ENCODE measurements at regions of chr2 and their contacts with region 1.

Region 1: DNA sequence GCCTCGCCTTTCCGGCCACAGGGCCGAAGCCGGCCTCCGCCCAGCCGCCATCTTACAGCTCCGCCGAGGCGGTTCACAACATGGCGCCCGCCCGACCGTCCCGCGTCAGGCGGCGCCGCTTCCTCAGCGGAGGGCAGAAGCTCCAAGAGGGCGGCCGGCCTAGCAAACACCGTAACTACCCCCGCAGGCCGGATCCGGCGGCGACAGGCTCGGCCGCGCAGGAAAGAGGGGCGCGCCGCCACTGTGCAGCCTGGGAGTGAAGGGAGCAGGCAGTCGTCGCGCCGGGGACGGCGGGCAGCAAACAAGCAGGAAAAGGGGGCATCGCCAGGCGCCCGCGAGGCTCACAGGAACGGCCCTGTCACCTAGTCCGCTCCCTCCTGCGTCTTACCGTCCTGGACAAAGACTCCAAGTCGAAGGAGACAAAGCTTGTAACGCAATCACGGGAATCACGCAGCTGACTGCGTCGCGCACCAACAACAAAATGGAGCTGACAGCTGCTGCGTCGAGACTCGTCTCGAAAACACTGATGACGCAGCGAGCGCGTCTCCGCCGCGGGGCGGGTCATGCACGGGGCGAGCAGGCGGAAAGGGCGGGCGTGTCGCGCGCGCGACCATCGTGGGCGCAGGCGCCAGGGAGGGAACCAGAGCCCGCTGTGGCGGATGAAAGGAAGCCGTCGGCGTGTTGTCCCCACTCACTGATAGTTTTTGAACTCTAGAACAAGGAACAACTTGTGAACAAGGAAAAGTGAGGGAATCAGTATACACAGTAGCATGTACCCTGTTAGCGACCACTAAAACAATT is at the start of gene CLK1:
- DNase-seq: peak; percentile 93 to 97 (median 94)
- H3K4me3 ChIP-seq: peak within 1 kb of the TSS; percentile 83 to 100
- H3K4me3 Mint-ChIP-seq: peak within 1 kb of the TSS; percentile 91 to 99 (median 96)
- H3K27ac ChIP-seq: peak within 1 kb of the TSS; percentile 100
- H3K27ac Mint-ChIP-seq: peak within 1 kb of the TSS; percentile 89 to 100 (median 100)
- H3K4me1 ChIP-seq: peaks cover 47% of the 10 kb centered on the region
- H3K4me1 Mint-ChIP-seq: peaks cover 28 to 59% (median 41%) of the 10 kb centered on the region in 4 donors
- H3K27me3 ChIP-seq: no peaks in the 10 kb centered on the region
- H3K27me3 Mint-ChIP-seq: no peaks in the 10 kb centered on the region
- total RNA-seq, gene CLK1: 472 to 499 TPM

Region 2: DNA sequence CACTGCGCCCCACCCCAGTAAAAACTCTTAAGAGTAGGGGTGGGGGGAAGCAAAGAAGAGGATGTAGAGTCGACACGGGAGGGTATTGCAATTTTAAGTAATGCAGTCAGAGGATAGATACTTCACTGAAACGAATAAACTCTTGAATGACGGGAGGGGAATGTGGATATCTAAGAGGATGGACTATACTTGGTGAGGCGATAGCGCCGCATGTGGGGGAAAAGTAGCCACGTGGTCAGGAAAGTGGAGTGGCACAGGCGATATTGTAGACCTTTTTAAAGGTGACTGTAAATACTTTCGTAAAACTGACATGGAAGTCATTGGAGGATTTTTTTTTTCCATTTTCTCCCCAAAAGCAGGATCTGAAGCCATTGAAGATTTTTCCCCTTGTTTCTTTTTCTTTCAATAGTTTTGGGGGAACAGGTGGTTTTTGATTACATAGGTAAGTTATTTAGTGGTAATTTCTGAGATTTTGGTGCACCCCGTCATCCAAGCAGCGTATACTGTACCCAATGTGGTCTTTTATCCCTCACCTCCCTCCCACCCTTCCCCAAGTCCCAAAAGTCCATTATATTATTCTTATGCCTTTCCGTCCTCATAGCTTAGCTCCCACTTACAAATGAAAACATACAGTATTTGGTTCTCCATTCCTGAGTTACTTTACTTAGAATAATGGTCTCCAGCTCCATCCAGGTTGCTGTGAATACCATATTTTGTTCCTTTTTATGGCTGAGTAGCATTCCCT is 13.7 kb before region 1 on chr2:
- CTCF ChIA-PET with region 1: interaction called, 6 read pairs
- POLR2A ChIA-PET with region 1: interaction called, 108 read pairs
- intact Hi-C with region 1: no loop called
- DNase-seq: no peak
- H3K4me3 ChIP-seq: no peak overlapping the region
- H3K4me3 Mint-ChIP-seq: peak overlapping the region in 1 of 8 donors; percentile 22
- H3K27ac ChIP-seq: no peak overlapping the region
- H3K27ac Mint-ChIP-seq: peak overlapping the region in 4 of 7 donors; percentile 47 to 89 (median 62)
- H3K4me1 ChIP-seq: no peaks in the 10 kb centered on the region
- H3K4me1 Mint-ChIP-seq: peaks cover 3 to 25% (median 6%) of the 10 kb centered on the region in 4 donors
- H3K27me3 ChIP-seq: no peaks in the 10 kb centered on the region
- H3K27me3 Mint-ChIP-seq: no peaks in the 10 kb centered on the region

Region 3: GRCh38 chr2:200901459-200902072 is 37.2 kb after region 1 on chr2:
- CTCF ChIA-PET with region 1: interaction called, 4 read pairs
- POLR2A ChIA-PET with region 1: interaction called, 15 read pairs
- intact Hi-C with region 1: no loop called
- DNase-seq: peak; percentile 76 to 83 (median 79)
- H3K4me3 ChIP-seq: no peak overlapping the region
- H3K4me3 Mint-ChIP-seq: no peak overlapping the region
- H3K27ac ChIP-seq: peak overlapping the region; percentile 1
- H3K27ac Mint-ChIP-seq: peak overlapping the region; percentile 10 to 81 (median 65)
- H3K4me1 ChIP-seq: no peaks in the 10 kb centered on the region
- H3K4me1 Mint-ChIP-seq: peaks cover 6 to 7% (median 6%) of the 10 kb centered on the region in 4 donors
- H3K27me3 ChIP-seq: no peaks in the 10 kb centered on the region
- H3K27me3 Mint-ChIP-seq: no peaks in the 10 kb centered on the region

Region 4: DNA sequence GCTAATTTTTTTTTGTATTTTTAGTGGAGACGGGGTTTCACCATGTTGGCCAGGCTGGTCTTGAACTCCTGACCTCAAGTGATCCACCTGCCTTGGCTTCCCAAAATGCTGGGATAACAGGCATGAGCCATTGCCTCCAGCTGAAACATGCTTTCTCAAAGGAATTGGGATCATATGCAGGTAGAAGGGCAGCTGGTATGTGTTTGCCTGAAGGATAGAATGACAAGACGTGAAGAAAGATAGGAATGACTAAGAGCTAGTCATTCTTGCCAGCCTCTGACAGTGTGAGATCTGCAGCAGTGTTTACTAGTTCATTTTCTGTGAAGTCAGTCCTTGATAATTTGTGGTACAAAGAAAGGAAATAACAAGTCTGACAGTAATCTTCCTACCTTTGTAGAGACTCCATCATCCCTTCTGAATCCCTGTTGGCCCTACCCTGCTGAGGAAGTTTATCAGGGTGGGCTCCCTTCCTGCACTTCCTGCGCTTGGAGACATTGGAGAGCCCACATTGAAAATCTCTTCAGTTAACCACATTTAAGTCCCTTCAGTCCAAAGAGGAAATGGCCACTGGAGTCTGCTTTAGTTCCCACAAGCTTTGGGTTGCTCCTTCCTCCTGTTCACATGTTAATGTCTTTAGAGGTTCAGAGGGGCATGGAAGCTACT is 266.3 kb after region 1 on chr2:
- CTCF ChIA-PET with region 1: no interaction called
- POLR2A ChIA-PET with region 1: interaction called, 11 read pairs
- intact Hi-C with region 1: no loop called
- DNase-seq: peak; percentile 42 to 85 (median 55)
- H3K4me3 ChIP-seq: peak overlapping the region in 1 of 2 donors; percentile 34
- H3K4me3 Mint-ChIP-seq: peak overlapping the region; percentile 72 to 86 (median 80)
- H3K27ac ChIP-seq: peak overlapping the region; percentile 64
- H3K27ac Mint-ChIP-seq: peak overlapping the region; percentile 87 to 98 (median 97)
- H3K4me1 ChIP-seq: peaks cover 89% of the 10 kb centered on the region
- H3K4me1 Mint-ChIP-seq: peaks cover 64 to 81% (median 72%) of the 10 kb centered on the region in 4 donors
- H3K27me3 ChIP-seq: no peaks in the 10 kb centered on the region
- H3K27me3 Mint-ChIP-seq: no peaks in the 10 kb centered on the region

Region 5: DNA sequence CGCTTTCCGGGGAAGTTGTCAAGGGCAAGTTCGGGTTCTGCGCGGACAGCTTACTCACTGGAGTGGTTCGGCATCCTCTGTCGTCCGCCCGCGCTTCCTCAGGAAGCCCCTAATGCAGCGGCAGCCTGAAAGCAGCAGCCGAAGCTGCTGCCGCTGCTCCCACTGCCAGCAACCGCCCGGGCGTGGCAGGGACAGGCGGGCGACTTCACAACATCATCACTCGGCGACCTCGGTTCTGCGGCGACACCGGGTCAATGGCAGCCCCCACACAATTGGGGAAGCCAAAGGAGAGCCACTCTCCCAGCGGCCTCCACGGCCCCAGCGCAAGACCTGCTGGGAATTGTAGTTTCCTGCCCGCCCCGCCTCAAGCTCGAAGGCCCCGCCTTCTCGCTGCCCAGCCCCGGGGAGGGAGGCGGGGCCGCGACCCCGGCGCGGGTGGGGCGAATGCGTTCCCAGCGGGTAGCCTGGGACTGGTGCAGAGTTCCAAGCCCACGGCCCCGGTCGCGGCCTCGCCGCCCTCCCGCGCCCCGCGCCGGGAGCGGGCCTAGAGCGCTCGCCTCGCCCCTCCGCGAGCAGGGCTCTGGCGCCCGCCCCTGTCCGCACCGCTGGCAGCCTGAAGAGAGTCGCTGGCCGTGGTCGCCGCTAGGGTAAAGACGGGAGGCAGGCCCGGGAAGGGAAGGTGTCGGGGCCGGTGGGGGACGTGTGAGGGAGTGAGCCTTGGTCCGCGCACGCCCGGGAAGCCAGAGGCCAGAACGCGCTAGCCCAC is 587.1 kb after region 1 on chr2 and contains the starts of genes STRADB and TRAK2:
- CTCF ChIA-PET with region 1: no interaction called
- POLR2A ChIA-PET with region 1: interaction called, 13 read pairs
- intact Hi-C with region 1: no loop called
- DNase-seq: peak; percentile 93 to 98 (median 95)
- H3K4me3 ChIP-seq: peak within 1 kb of the TSS; percentile 38 to 93
- H3K4me3 Mint-ChIP-seq: peak within 1 kb of the TSS; percentile 94 to 99 (median 98)
- H3K27ac ChIP-seq: peak within 1 kb of the TSS; percentile 74
- H3K27ac Mint-ChIP-seq: peak within 1 kb of the TSS; percentile 95 to 98 (median 97)
- H3K4me1 ChIP-seq: peaks cover 49% of the 10 kb centered on the region
- H3K4me1 Mint-ChIP-seq: peaks cover 29 to 52% (median 41%) of the 10 kb centered on the region in 4 donors
- H3K27me3 ChIP-seq: no peaks in the 10 kb centered on the region
- H3K27me3 Mint-ChIP-seq: no peaks in the 10 kb centered on the region
- total RNA-seq, gene STRADB: 17.3 to 20.9 TPM
- total RNA-seq, gene TRAK2: 46.8 to 47.3 TPM

Measured in CD4-positive, alpha-beta memory T cell (primary cell).